OCI-LY7 (cell line): ENCODE measurements at regions of chr2 and their contacts with region 1.

Region 1: GRCh38 chr2:142853912-142854311 is 23.6 kb upstream of the KYNU start:
- DNase-seq: no peak
- H3K4me3 ChIP-seq: no peak overlapping the region
- H3K27ac ChIP-seq: no peak overlapping the region
- H3K4me1 ChIP-seq: no peaks in the 10 kb centered on the region
- CTCF ChIP-seq: no peak

Region 2: DNA sequence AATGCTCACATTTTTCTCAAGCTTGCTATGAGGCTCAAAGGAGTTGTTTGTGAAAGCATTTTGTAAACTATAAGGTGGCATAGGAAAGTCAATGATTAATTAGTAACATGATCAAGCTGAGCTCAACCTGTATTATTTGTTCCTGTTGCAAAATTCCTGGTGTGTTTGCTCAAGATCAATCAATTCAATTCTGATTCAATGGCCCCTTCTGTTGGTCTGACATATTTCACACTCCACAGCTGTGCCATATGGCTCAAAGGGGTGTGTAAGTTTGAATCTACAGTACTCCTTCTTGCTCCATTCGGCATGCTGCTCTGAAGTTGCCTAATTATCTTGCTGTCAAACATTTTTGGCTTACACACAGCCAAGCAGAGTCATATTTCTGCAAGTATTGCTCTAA is 381.5 kb before region 1 on chr2:
- CTCF ChIA-PET with region 1: no interaction called
- POLR2A ChIA-PET with region 1: no interaction called
- intact Hi-C with region 1: no loop called
- DNase-seq: no peak
- H3K4me3 ChIP-seq: no peak overlapping the region
- H3K27ac ChIP-seq: no peak overlapping the region
- H3K4me1 ChIP-seq: no peaks in the 10 kb centered on the region
- CTCF ChIP-seq: no peak

Region 3: GRCh38 chr2:142834021-142834420 is 19.9 kb before region 1 on chr2:
- CTCF ChIA-PET with region 1: no interaction called
- POLR2A ChIA-PET with region 1: interaction called, 15 read pairs
- intact Hi-C with region 1: no loop called
- DNase-seq: no peak
- H3K4me3 ChIP-seq: no peak overlapping the region
- H3K27ac ChIP-seq: no peak overlapping the region
- H3K4me1 ChIP-seq: no peaks in the 10 kb centered on the region
- CTCF ChIP-seq: no peak